GM12878 (cell line): ENCODE measurements at regions of chr18 and their contacts with region 1.

Region 1: GRCh38 chr18:11518788-11519685 is 90.4 kb upstream of the SLC35G4 start:
- DNase-seq: no peak
- ATAC-seq: peak; percentile 100
- H3K4me3 ChIP-seq: no peak overlapping the region
- H3K27ac ChIP-seq: no peak overlapping the region
- H3K4me1 ChIP-seq: no peaks in the 10 kb centered on the region
- H3K27me3 ChIP-seq: peaks cover 0 to 2% of the 10 kb centered on the region in 2 experiments; a peak in 2 of 4 replicates
- CTCF ChIP-seq: peak; percentile 83 to 97 (median 92)
- EP300 ChIP-seq: no peak
- POLR2A ChIP-seq: no peak
- RAD21 ChIP-seq: peak; percentile 83

Region 2: DNA sequence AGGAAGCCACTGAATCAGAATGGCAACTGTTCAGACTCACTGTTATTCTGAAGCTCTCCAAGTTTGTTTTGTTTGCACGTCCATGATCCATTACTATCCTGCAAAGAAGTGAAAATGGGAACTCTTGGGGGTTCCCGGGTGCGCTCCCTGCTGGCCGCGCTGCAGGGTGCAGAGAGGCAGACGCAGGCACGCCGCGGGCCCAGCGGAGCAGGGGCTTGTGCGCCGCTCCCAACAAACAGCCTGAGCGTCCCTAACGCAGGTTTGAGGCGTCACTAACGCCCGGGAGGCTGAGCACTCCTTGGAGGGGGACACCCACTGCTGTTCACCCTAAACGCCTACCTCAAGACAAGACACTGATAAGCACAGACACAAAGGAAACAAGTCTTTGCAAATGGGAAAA is 355.4 kb before region 1 on chr18:
- CTCF ChIA-PET with region 1: interaction called, 3 read pairs
- POLR2A ChIA-PET with region 1: no interaction called
- RAD21 ChIA-PET with region 1: no interaction called
- SMC1A ChIA-PET with region 1: no interaction called
- in situ Hi-C with region 1: no loop called
- intact Hi-C with region 1: loop called (anchors 10 kb)
- DNase-seq: no peak
- ATAC-seq: peak; percentile 94
- H3K4me3 ChIP-seq: no peak overlapping the region
- H3K27ac ChIP-seq: no peak overlapping the region
- H3K4me1 ChIP-seq: peaks cover 9% of the 10 kb centered on the region
- H3K27me3 ChIP-seq: no peaks in the 10 kb centered on the region
- CTCF ChIP-seq: peak; percentile 61 to 88 (median 62)
- EP300 ChIP-seq: no peak
- POLR2A ChIP-seq: no peak
- RAD21 ChIP-seq: peak; percentile 25; the same call in 1 of the 2 replicates

Region 3: DNA sequence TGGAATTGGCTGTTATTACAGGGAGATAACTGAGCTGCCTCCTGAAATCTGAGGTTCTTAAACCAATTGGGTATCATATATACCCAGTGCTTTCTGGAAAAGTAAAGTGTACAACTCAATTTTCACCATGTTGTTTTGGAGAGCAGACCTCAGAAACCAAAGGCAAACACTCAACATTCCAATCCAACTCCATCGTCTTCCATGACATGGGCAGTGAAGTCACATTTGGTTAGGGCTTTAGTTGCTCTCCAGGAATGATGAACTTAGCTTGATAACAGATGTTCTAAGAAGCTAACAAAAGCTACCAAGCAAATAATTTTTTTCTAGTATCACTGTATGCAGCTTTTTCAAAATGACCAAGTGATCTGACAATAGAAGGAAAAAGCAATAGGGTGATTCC is 16.7 kb before region 1 on chr18:
- CTCF ChIA-PET with region 1: interaction called, 19 read pairs
- POLR2A ChIA-PET with region 1: no interaction called
- RAD21 ChIA-PET with region 1: no interaction called
- SMC1A ChIA-PET with region 1: interaction called, 3 read pairs
- in situ Hi-C with region 1: no loop called
- intact Hi-C with region 1: no loop called
- DNase-seq: no peak
- ATAC-seq: no peak
- H3K4me3 ChIP-seq: no peak overlapping the region
- H3K27ac ChIP-seq: no peak overlapping the region
- H3K4me1 ChIP-seq: no peaks in the 10 kb centered on the region
- H3K27me3 ChIP-seq: no peaks in the 10 kb centered on the region
- CTCF ChIP-seq: no peak
- EP300 ChIP-seq: no peak
- POLR2A ChIP-seq: no peak
- RAD21 ChIP-seq: no peak

Region 4: GRCh38 chr18:11553098-11553940 is 34.3 kb after region 1 on chr18:
- CTCF ChIA-PET with region 1: interaction called, 14 read pairs
- POLR2A ChIA-PET with region 1: no interaction called
- RAD21 ChIA-PET with region 1: interaction called, 4 read pairs
- SMC1A ChIA-PET with region 1: interaction called, 4 read pairs
- in situ Hi-C with region 1: no loop called
- intact Hi-C with region 1: no loop called
- DNase-seq: no peak
- ATAC-seq: peak; percentile 90
- H3K4me3 ChIP-seq: no peak overlapping the region
- H3K27ac ChIP-seq: no peak overlapping the region
- H3K4me1 ChIP-seq: no peaks in the 10 kb centered on the region
- H3K27me3 ChIP-seq: peaks cover 2 to 3% of the 10 kb centered on the region in 2 experiments; a peak in 3 of 4 replicates
- CTCF ChIP-seq: peak; percentile 83 to 91 (median 91)
- EP300 ChIP-seq: no peak
- POLR2A ChIP-seq: no peak
- RAD21 ChIP-seq: peak; percentile 87